Sigmoid colon (tissue), 7 donors: ENCODE measurements at regions of chr1 and their contacts with region 1.

Region 1: DNA sequence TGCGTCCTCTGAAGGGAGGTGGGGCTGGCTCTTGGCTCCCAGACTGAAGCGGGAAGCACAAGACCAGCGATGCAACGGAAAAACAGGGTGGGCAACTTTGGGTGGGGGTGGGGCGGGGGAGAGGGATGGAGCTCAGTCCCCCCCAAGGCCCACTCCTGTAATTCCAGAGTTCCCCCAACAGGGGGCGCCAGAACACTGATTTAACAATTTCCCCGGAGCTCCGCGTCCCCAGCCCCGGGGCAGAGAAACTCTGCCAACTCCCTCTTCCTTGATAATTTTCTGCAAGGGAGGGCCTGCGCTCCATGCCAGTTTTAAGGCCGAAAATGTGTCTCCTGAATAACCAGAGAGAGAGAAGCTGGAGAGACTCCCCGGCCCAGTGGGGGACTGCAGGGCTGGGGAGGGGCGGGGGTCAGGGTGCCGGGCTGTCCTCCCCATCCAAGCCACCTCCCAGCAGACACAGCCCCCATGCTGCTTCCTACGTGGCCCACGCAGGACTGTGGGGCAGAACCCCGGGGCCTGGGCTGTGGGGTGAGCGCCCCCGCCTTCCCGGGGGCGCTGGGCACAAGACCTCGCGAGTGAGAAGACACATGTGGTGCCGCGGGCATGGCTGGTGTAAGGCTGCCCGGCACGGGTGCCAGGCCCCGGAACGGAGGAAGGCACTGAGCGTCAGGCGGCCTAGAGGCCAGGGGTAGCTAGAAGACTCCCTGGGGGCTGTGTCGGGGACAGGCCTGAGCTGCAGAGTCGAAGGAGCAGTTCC is 51.4 kb downstream of the KIF21B start:
- DNase-seq: peak; percentile 81
- H3K4me3 ChIP-seq: no peak overlapping the region
- H3K27ac ChIP-seq: no peak overlapping the region
- H3K4me1 ChIP-seq: no peaks in the 10 kb centered on the region
- H3K27me3 ChIP-seq: no peaks in the 10 kb centered on the region
- CTCF ChIP-seq: peak; percentile 22 to 97 (median 68)
- EP300 ChIP-seq: no peak
- POLR2A ChIP-seq: no peak

Region 2: GRCh38 chr1:201042779-201043461 is 70.8 kb after region 1 on chr1:
- intact Hi-C with region 1: loop called (anchors 1 kb)
- DNase-seq: no peak
- H3K4me3 ChIP-seq: no peak overlapping the region
- H3K27ac ChIP-seq: no peak overlapping the region
- H3K4me1 ChIP-seq: peaks cover 0 to 9% (median 4%) of the 10 kb centered on the region in 4 donors
- H3K27me3 ChIP-seq: no peaks in the 10 kb centered on the region
- CTCF ChIP-seq: peak; percentile 39 to 85 (median 74)
- EP300 ChIP-seq: no peak
- POLR2A ChIP-seq: no peak

Region 3: GRCh38 chr1:201114236-201115131 is 142.4 kb after region 1 on chr1:
- intact Hi-C with region 1: loop called (anchors 1 kb)
- DNase-seq: peak; percentile 94
- H3K4me3 ChIP-seq: peak overlapping the region; percentile 36 to 63 (median 52)
- H3K27ac ChIP-seq: peak overlapping the region in 3 of 4 donors; percentile 25 to 59 (median 39)
- H3K4me1 ChIP-seq: peaks cover 0 to 14% (median 10%) of the 10 kb centered on the region in 4 donors
- H3K27me3 ChIP-seq: peaks cover 5 to 7% (median 5%) of the 10 kb centered on the region in 3 donors
- CTCF ChIP-seq: peak; percentile 81 to 91 (median 86)
- EP300 ChIP-seq: no peak
- POLR2A ChIP-seq: no peak

Region 4: GRCh38 chr1:201222125-201222524 is 250.0 kb after region 1 on chr1:
- intact Hi-C with region 1: loop called (anchors 2 kb)
- DNase-seq: no peak
- H3K4me3 ChIP-seq: no peak overlapping the region
- H3K27ac ChIP-seq: no peak overlapping the region
- H3K4me1 ChIP-seq: no peaks in the 10 kb centered on the region
- H3K27me3 ChIP-seq: no peaks in the 10 kb centered on the region
- CTCF ChIP-seq: no peak
- EP300 ChIP-seq: no peak
- POLR2A ChIP-seq: no peak